A549 (cell line): ENCODE measurements at regions of chr1 and their contacts with region 1.

Region 1: GRCh38 chr1:6171548-6172119 is 8.5 kb downstream of the CHD5 start:
- DNase-seq: peak; percentile 33 to 41
- ATAC-seq: peak; percentile 79 to 90
- H3K4me3 ChIP-seq: no peak overlapping the region
- H3K27ac ChIP-seq: no peak overlapping the region
- H3K4me1 ChIP-seq: no peaks in the 10 kb centered on the region
- CTCF ChIP-seq: peak; percentile 48
- EP300 ChIP-seq: no peak
- POLR2A ChIP-seq: no peak
- RAD21 ChIP-seq: peak; percentile 48 to 61

Region 2: GRCh38 chr1:6108937-6109614 is 62.6 kb before region 1 on chr1:
- CTCF ChIA-PET with region 1: interaction called, 18 read pairs
- POLR2A ChIA-PET with region 1: no interaction called
- DNase-seq: peak; percentile 69 to 71
- ATAC-seq: peak; percentile 94 to 96
- H3K4me3 ChIP-seq: no peak overlapping the region
- H3K27ac ChIP-seq: no peak overlapping the region
- H3K4me1 ChIP-seq: no peaks in the 10 kb centered on the region
- CTCF ChIP-seq: peak; percentile 58; the same call in 2 of the 3 replicates
- EP300 ChIP-seq: no peak
- POLR2A ChIP-seq: no peak
- RAD21 ChIP-seq: peak; percentile 73 to 82

Region 3: GRCh38 chr1:6127587-6128163 is 44.0 kb before region 1 on chr1:
- CTCF ChIA-PET with region 1: interaction called, 11 read pairs
- POLR2A ChIA-PET with region 1: no interaction called
- DNase-seq: peak; percentile 54 to 67
- ATAC-seq: peak; percentile 61 to 89
- H3K4me3 ChIP-seq: no peak overlapping the region
- H3K27ac ChIP-seq: peak overlapping the region in 1 of 2 experiments; percentile 61; a peak in 2 of 6 replicates
- H3K4me1 ChIP-seq: peaks cover 3% of the 10 kb centered on the region; the same call in 2 of the 3 replicates
- CTCF ChIP-seq: no peak
- EP300 ChIP-seq: no peak
- POLR2A ChIP-seq: no peak
- RAD21 ChIP-seq: no peak

Region 4: DNA sequence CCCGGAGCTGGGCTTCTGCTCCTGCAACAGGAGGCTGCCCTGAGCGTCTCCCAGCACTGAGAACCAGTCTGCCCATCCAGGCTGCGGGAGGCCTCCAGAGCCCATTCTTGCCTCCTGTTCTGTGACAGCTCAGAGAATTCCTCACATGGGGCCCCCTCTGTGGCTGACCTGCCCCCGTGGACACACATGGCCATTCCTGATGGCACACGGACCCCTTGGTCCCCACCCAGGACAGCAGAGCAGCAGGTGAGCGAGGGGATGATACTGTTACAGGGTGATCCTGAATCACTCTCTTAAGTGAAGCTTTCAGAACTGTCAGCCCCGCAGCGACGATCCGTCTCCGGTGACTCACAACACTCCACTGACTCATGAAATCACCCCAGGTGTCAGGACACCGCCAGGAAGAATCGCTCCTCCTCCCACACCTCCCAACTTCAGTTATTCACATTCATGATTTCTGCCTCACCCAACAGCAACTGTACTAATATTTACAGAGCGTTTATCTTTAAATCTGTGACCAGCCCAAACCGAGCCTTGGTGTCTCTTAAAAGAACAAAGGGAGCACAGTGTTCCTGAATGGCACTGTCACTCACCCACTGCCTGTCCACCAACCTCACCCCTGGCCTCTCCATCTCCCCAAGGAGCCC is 14.0 kb before region 1 on chr1:
- CTCF ChIA-PET with region 1: interaction called, 16 read pairs
- POLR2A ChIA-PET with region 1: no interaction called
- DNase-seq: peak; percentile 71 to 93
- ATAC-seq: peak; percentile 87 to 92
- H3K4me3 ChIP-seq: 0 out of 3 replicates have a peak overlapping the region, but pooled peaks have one; percentile 24
- H3K27ac ChIP-seq: peak overlapping the region; percentile 63 to 76; a peak in 5 of 6 replicates
- H3K4me1 ChIP-seq: peaks cover 21% of the 10 kb centered on the region
- CTCF ChIP-seq: no peak
- EP300 ChIP-seq: no peak
- POLR2A ChIP-seq: no peak
- RAD21 ChIP-seq: no peak